Panc1 (cell line): ENCODE measurements at regions of chr6 and their contacts with region 1.

Region 1: GRCh38 chr6:97757181-97757976 is 474.4 kb upstream of the MMS22L start:
- DNase-seq: no peak
- ATAC-seq: no peak
- H3K4me3 ChIP-seq: no peak overlapping the region
- H3K27ac ChIP-seq: no peak overlapping the region
- H3K4me1 ChIP-seq: no peaks in the 10 kb centered on the region
- H3K27me3 ChIP-seq: no peaks in the 10 kb centered on the region
- CTCF ChIP-seq: no peak

Region 2: GRCh38 chr6:97805596-97805995 is 48.2 kb after region 1 on chr6:
- CTCF ChIA-PET with region 1: no interaction called
- POLR2A ChIA-PET with region 1: interaction called, 11 read pairs
- in situ Hi-C with region 1: no loop called
- intact Hi-C with region 1: no loop called
- DNase-seq: no peak
- ATAC-seq: no peak
- H3K4me3 ChIP-seq: no peak overlapping the region
- H3K27ac ChIP-seq: no peak overlapping the region
- H3K4me1 ChIP-seq: no peaks in the 10 kb centered on the region
- H3K27me3 ChIP-seq: no peaks in the 10 kb centered on the region
- CTCF ChIP-seq: no peak